ENCODE measurements at regions of chr10 and their contacts with region 1.

Region 1: DNA sequence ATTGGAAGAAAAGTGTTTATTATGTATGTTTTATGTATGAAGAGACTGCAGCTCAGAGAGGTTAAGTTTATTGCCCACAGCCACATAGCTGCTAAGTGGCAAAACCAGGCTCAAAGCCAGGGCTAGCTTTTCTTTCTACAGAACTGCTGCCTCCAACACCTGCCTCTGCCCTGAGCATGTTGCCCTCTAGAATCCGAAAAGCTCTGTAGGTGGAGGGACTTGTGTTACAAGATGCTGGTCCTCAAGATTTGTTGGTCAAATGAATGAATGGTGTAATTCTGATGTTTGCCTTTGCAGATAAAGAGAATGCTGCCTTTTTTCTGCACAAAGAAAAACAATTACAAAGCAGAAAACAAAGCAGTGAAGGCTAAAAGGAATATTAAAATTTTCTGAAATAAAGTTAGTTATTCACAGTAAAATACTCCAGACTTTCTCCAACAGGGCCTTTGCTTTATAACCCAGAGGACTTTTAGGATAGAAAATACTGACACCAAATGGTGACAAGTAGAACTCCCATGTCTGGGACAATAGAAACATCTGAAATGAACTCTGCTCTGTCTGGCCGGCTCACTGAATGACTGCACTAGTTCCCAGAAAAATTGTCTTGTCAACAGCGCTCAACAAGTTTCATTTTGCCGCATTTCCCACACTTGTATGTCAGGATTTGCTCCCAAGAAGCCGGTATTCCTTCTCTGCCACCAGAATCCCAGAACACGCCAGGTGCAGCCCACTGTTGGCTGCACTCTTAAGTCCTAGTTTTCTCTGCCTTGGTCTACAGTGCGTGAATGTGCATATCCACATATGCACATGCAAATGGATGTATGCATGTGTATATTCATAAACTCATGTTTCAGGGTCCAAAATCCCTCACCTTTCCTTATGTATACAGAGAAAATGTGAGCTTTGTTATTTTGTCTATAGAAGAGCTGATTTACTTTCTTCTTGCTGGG is 11.0 kb upstream of the DNTT start:
- DNase-seq: peak in 2 of 10 donors; percentile 16 to 23

Region 2: DNA sequence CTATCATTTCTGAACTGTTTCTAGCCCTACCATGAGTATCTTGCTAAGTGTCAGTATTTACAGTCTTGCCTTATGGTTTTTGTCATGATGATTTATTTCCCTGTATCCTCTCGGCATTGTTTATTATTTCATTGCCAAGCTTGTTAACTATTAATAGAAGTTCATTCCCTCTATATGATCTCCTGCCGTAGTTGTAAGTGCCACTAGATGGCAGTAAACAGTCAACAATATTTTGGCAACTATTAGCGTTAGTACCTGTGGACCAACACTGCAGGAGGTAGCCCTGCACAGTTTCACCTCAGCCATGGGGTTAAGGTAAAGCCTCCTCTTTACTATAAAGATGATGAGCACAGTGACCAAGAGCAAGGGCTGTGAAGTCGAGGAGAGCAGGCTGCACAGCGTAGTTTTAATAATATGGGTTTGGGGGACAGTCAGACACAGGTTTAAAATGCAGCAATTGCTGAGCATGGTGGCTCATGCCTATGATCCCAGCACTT is 276.0 kb before region 1 on chr10:
- intact Hi-C with region 1: loop called (anchors 2 kb)
- DNase-seq: peak in 2 of 10 donors; percentile 2 to 14

Region 3: DNA sequence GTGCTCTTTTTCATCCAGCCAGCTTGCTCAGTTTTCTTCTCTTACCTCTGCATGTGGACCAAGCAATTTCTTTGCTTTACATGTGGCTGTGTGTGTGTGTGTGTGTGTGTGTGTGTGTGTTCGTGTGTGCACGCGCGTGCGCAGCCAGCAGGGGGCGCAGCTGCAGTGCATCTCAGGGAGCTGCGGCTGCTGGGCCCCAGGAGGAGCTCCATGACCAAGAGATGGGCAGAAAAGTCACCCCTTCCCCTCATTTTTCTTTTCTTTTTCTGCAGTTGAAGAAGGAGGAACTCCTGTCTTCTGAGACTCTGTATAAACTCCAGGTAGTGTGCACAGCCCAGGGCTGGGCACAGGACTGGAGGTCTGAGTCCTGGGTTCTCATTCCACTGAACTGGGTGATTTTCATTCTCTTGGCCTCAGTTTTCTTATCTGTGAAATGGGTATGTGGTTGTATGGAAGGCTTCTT is 63.6 kb before region 1 on chr10:
- intact Hi-C with region 1: loop called (anchors 1 kb)
- DNase-seq: peak in 9 of 10 donors; percentile 26 to 92 (median 66)

Region 4: DNA sequence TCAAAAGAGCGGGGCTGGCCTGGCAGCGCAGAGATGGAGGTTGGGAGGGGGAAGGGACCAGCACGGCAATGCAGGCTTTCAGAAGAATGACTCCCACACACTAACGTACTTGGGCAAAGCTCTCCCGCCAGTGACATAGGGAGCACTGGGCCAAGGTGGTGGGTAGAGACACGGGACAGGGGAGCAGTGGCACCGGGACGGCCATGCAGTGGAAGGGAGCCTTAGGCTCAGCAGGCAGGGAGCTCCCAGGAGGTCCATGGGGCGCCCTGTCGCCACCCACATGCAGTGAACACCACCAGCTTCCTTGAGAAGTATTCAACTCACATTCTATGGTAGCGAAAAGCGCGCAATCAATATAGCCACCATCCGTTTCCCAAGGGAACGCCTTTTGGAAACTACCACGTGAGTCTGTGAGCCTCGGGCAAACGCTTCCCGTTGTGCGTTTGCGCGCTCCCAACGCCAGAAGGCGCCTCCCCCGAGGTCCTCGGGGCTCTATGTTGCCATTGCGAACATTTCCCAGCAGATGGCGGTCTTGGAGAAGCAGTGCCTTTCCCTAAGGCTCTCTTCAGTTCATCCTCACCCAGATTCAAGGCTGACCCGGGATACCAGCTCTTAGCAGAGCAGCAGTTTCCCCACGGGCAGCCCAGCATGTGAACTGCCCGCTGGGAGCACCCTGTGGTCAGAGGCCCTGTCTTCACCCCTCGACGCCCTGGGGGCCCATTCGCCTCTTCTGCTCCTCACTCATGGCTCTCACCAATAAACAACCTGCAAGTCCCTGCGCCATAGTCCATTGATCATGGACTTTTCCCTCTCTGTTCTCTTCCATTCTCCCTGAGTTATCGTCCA is 82.0 kb after region 1 on chr10:
- intact Hi-C with region 1: no loop called
- DNase-seq: peak; percentile 80 to 98 (median 92)